Naive thymus-derived CD4-positive, alpha-beta T cell (primary cell): ENCODE measurements at regions of chrX and their contacts with region 1.

Region 1: GRCh38 chrX:110992611-110993010 is 103.4 kb upstream of the PAK3 start:
- DNase-seq: peak in 5 of 9 donors; percentile 10 to 22 (median 17)
- ATAC-seq: no peak
- H3K4me3 ChIP-seq: no peak overlapping the region
- H3K4me3 Mint-ChIP-seq: no peak overlapping the region
- H3K27ac ChIP-seq: no peak overlapping the region
- H3K27ac Mint-ChIP-seq: no peak overlapping the region
- H3K4me1 ChIP-seq: no peaks in the 10 kb centered on the region
- H3K4me1 Mint-ChIP-seq: no peaks in the 10 kb centered on the region
- H3K27me3 ChIP-seq: no peaks in the 10 kb centered on the region
- H3K27me3 Mint-ChIP-seq: peaks cover 0 to 14% (median 4%) of the 10 kb centered on the region in 5 donors

Region 2: DNA sequence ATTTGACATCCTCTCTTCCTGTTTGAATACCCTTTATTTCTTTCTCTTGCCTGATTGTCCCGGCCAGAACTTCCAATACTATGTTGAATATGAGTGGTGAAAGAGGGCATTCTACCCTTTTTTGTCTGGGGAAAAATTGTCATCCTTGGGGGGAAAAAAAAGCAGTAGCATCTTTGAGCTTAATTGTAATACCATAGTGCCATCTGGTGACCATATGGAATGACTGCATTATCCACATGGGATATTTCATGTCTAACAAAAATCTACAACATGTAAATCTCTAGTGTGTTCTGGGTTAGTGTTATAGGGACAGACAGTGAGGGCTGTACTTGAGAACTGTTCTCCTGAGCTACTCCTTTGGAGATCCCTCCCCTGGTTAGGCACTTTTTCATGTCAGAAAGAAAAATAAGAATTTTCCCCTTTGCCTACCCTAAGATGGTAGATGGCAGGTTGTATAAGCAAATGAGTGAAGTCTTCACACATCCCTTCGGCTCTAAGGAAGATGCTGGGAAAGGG is 251.7 kb after region 1 on chrX:
- CTCF ChIA-PET with region 1: no interaction called
- POLR2A ChIA-PET with region 1: no interaction called
- intact Hi-C with region 1: loop called in 1 of 2 experiments (anchors 10 kb)
- DNase-seq: no peak
- ATAC-seq: no peak
- H3K4me3 ChIP-seq: no peak overlapping the region
- H3K4me3 Mint-ChIP-seq: no peak overlapping the region
- H3K27ac ChIP-seq: no peak overlapping the region
- H3K27ac Mint-ChIP-seq: no peak overlapping the region
- H3K4me1 ChIP-seq: no peaks in the 10 kb centered on the region
- H3K4me1 Mint-ChIP-seq: no peaks in the 10 kb centered on the region
- H3K27me3 ChIP-seq: no peaks in the 10 kb centered on the region
- H3K27me3 Mint-ChIP-seq: peaks cover 0 to 2% (median 0%) of the 10 kb centered on the region in 5 donors

Region 3: GRCh38 chrX:111445486-111445885 is 452.9 kb after region 1 on chrX:
- CTCF ChIA-PET with region 1: no interaction called
- POLR2A ChIA-PET with region 1: no interaction called
- intact Hi-C with region 1: loop called in 1 of 2 experiments (anchors 2 kb)
- DNase-seq: peak in 5 of 9 donors; percentile 0 to 25 (median 13)
- ATAC-seq: no peak
- H3K4me3 ChIP-seq: no peak overlapping the region
- H3K4me3 Mint-ChIP-seq: no peak overlapping the region
- H3K27ac ChIP-seq: no peak overlapping the region
- H3K27ac Mint-ChIP-seq: no peak overlapping the region
- H3K4me1 ChIP-seq: no peaks in the 10 kb centered on the region
- H3K4me1 Mint-ChIP-seq: peaks cover 0 to 1% (median 0%) of the 10 kb centered on the region in 7 donors
- H3K27me3 ChIP-seq: no peaks in the 10 kb centered on the region
- H3K27me3 Mint-ChIP-seq: peaks cover 0 to 12% (median 0%) of the 10 kb centered on the region in 5 donors